ENCODE measurements at regions of chr1 and their contacts with region 1.

Region 1: GRCh38 chr1:235843461-235843961 is 23.2 kb downstream of the LYST start:
- DNase-seq: no peak
- ATAC-seq: peak; percentile 65
- H3K4me3 Mint-ChIP-seq: no peak overlapping the region
- H3K27ac Mint-ChIP-seq: no peak overlapping the region
- H3K4me1 Mint-ChIP-seq: peaks cover 57% of the 10 kb centered on the region
- H3K27me3 Mint-ChIP-seq: no peaks in the 10 kb centered on the region

Region 2: GRCh38 chr1:235831148-235831547 is 12.4 kb before region 1 on chr1:
- CTCF ChIA-PET with region 1: interaction called, 30 read pairs
- POLR2A ChIA-PET with region 1: no interaction called
- DNase-seq: no peak
- ATAC-seq: no peak
- H3K4me3 Mint-ChIP-seq: no peak overlapping the region
- H3K27ac Mint-ChIP-seq: no peak overlapping the region
- H3K4me1 Mint-ChIP-seq: peaks cover 2% of the 10 kb centered on the region
- H3K27me3 Mint-ChIP-seq: no peaks in the 10 kb centered on the region

Region 3: DNA sequence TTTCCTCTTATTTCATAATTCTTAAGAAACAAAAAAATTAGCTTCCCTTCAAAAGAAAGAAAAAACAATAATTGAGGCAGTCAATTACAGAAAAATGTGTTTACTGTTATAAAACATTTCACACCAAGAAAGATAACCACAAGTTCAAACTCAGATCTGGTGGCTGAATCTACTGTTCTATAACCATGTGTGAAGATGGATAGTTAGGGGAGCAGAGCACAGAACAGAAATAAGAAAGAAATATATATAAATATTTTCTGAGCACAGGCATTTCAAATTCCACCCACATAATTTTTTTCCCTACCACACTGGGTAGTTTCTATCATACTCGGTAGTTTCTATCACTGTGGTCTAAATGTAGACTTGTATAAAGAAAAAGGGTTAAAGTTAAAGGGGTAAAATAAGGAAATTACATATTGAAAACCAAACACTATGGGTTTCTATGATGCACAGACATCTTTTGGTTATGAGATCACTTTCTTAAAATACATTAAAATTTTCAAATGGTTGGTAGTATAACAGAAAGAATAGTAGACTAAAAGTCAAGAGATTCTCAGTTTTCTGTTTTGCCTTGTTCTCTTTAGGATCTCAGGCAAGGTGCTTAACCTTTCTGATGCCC is 12.4 kb after region 1 on chr1:
- CTCF ChIA-PET with region 1: interaction called, 19 read pairs
- POLR2A ChIA-PET with region 1: no interaction called
- DNase-seq: no peak
- ATAC-seq: peak; percentile 59
- H3K4me3 Mint-ChIP-seq: no peak overlapping the region
- H3K27ac Mint-ChIP-seq: peak overlapping the region; percentile 39
- H3K4me1 Mint-ChIP-seq: peaks cover 47% of the 10 kb centered on the region
- H3K27me3 Mint-ChIP-seq: no peaks in the 10 kb centered on the region

Region 4: GRCh38 chr1:236009857-236010256 is 166.3 kb after region 1 on chr1:
- CTCF ChIA-PET with region 1: no interaction called
- POLR2A ChIA-PET with region 1: no interaction called
- DNase-seq: no peak
- ATAC-seq: no peak
- H3K4me3 Mint-ChIP-seq: no peak overlapping the region
- H3K27ac Mint-ChIP-seq: no peak overlapping the region
- H3K4me1 Mint-ChIP-seq: no peaks in the 10 kb centered on the region
- H3K27me3 Mint-ChIP-seq: peaks cover 2% of the 10 kb centered on the region

Measured in activated CD8-positive, alpha-beta T cell treated with anti-CD3 and anti-CD28 coated beads, Interleukin-2, amount 10 ng/mL, durations not matched to agents 7 days and 5 days (primary cell).